H1 (cell line): ENCODE measurements at regions of chr17 and their contacts with region 1.

Region 1: GRCh38 chr17:76612977-76613851 is 27.6 kb upstream of the ST6GALNAC2 start:
- DNase-seq: peak; percentile 51 to 80
- H3K4me3 ChIP-seq: no peak overlapping the region
- H3K27ac ChIP-seq: no peak overlapping the region
- H3K4me1 ChIP-seq: peaks cover 0 to 4% (median 1%) of the 10 kb centered on the region in 4 experiments; a peak in 3 of 7 replicates
- H3K27me3 ChIP-seq: no peaks in the 10 kb centered on the region
- CTCF ChIP-seq: peak; percentile 48 to 84 (median 57)
- EP300 ChIP-seq: no peak
- POLR2A ChIP-seq: no peak
- RAD21 ChIP-seq: peak; percentile 55 to 68

Region 2: GRCh38 chr17:76337413-76337777 is 275.8 kb before region 1 on chr17:
- CTCF ChIA-PET with region 1: no interaction called
- POLR2A ChIA-PET with region 1: no interaction called
- DNase-seq: no peak
- H3K4me3 ChIP-seq: no peak overlapping the region
- H3K27ac ChIP-seq: no peak overlapping the region
- H3K4me1 ChIP-seq: no peaks in the 10 kb centered on the region
- H3K27me3 ChIP-seq: no peaks in the 10 kb centered on the region
- CTCF ChIP-seq: no peak
- EP300 ChIP-seq: no peak
- POLR2A ChIP-seq: no peak
- RAD21 ChIP-seq: no peak

Region 3: DNA sequence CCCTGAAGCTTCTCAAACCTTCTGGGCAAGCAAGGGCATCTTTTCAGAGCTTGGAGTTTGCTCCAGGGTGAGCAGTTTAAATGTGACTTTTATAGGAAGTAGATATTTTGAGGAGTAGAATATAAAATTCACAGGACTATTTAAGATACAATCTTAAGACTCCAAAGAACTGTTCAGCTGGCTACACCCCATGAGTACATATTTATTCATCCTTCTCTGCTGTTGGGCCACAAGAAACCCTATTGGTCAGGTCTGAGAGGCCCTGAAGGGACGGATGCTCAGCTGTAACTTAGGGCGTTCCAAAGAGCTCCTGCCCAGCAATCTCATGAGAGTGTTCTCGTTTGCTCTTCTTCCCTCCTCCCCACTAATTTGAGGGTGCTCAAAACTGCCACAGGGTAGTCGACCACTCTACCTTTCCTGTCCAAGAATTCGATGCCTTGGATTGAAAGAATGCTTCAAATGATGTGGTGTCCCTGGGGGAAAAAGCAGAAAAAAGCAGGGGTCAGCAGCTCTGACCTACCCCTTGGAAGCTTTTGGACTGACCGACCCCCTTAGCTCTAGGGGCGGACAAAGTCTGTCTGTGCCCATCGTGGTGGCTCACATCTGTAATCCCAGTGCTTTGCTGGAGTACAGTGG is 34.8 kb before region 1 on chr17:
- CTCF ChIA-PET with region 1: interaction called, 13 read pairs
- POLR2A ChIA-PET with region 1: no interaction called
- DNase-seq: no peak
- H3K4me3 ChIP-seq: no peak overlapping the region
- H3K27ac ChIP-seq: no peak overlapping the region
- H3K4me1 ChIP-seq: peaks cover 0 to 9% (median 4%) of the 10 kb centered on the region in 4 experiments; a peak in 5 of 7 replicates
- H3K27me3 ChIP-seq: peaks cover 0 to 31% (median 25%) of the 10 kb centered on the region in 4 experiments; a peak in 6 of 7 replicates
- CTCF ChIP-seq: no peak
- EP300 ChIP-seq: no peak
- POLR2A ChIP-seq: no peak
- RAD21 ChIP-seq: no peak

Region 4: GRCh38 chr17:76643553-76644148 is 30.4 kb after region 1 on chr17 and contains the start of gene ST6GALNAC1:
- CTCF ChIA-PET with region 1: no interaction called
- POLR2A ChIA-PET with region 1: no interaction called
- DNase-seq: no peak
- H3K4me3 ChIP-seq: no peak within 1 kb of the TSS
- H3K27ac ChIP-seq: no peak within 1 kb of the TSS
- H3K4me1 ChIP-seq: peaks cover 0 to 5% (median 3%) of the 10 kb centered on the region in 4 experiments; a peak in 3 of 7 replicates
- H3K27me3 ChIP-seq: no peaks in the 10 kb centered on the region
- CTCF ChIP-seq: no peak
- EP300 ChIP-seq: no peak
- POLR2A ChIP-seq: no peak
- RAD21 ChIP-seq: no peak
- total RNA-seq, gene ST6GALNAC1: not detected in 2 replicates